PC-3 (cell line): ENCODE measurements at regions of chr3 and their contacts with region 1.

Region 1: GRCh38 chr3:30248423-30248822 is 358.0 kb upstream of the TGFBR2 start:
- DNase-seq: no peak
- ATAC-seq: no peak
- H3K4me3 ChIP-seq: no peak overlapping the region
- H3K27ac ChIP-seq: no peak overlapping the region
- H3K4me1 ChIP-seq: peaks cover 13% of the 10 kb centered on the region; the same call in 1 of the 2 replicates
- H3K27me3 ChIP-seq: no peaks in the 10 kb centered on the region
- CTCF ChIP-seq: no peak

Region 2: DNA sequence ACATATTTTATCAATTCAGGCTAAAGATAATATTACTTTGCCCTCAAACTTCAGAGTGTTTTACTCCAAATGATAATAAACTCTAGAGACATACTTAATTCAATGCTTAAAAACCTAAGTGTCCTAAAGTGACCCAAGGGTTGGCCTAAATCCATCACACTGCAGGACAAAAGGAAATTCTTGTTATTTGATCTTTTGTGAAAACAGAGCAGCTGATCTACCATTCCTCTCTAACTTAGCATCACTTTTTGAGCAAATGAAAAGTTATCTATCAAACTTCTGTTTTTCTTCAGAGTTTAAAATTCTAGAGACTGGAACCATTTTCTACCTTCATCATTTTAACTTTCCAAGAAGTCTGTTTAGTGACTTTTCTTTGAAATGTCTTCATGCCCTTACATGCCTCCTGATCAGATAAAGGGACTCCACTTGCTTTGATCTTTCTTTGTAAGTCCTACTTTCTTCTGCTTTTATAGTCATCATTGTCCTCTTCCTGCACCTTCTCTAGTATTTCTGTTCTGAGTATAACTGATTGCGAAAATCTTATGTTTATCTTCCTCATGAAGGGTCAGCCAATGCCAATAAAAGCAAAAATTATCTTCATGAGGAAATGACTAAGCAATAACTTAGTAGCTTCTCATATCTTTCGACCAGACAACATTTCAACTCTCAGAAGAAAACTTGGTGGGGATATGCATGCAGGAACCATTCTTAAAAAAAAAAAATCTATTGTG is 20.7 kb before region 1 on chr3:
- CTCF ChIA-PET with region 1: no interaction called
- POLR2A ChIA-PET with region 1: no interaction called
- intact Hi-C with region 1: no loop called
- DNase-seq: peak; percentile 86
- ATAC-seq: peak; percentile 81
- H3K4me3 ChIP-seq: no peak overlapping the region
- H3K27ac ChIP-seq: peak overlapping the region; percentile 60
- H3K4me1 ChIP-seq: peaks cover 17% of the 10 kb centered on the region
- H3K27me3 ChIP-seq: no peaks in the 10 kb centered on the region
- CTCF ChIP-seq: no peak

Region 3: GRCh38 chr3:30317561-30317960 is 69.1 kb after region 1 on chr3:
- CTCF ChIA-PET with region 1: no interaction called
- POLR2A ChIA-PET with region 1: interaction called, 3 read pairs
- intact Hi-C with region 1: loop called (anchors 2 kb)
- DNase-seq: peak; percentile 43
- ATAC-seq: no peak
- H3K4me3 ChIP-seq: no peak overlapping the region
- H3K27ac ChIP-seq: peak overlapping the region; percentile 40
- H3K4me1 ChIP-seq: peaks cover 7% of the 10 kb centered on the region; the same call in 1 of the 2 replicates
- H3K27me3 ChIP-seq: no peaks in the 10 kb centered on the region
- CTCF ChIP-seq: no peak